Heart left ventricle (tissue), 16 donors: ENCODE measurements at regions of chr3 and their contacts with region 1.

Region 1: DNA sequence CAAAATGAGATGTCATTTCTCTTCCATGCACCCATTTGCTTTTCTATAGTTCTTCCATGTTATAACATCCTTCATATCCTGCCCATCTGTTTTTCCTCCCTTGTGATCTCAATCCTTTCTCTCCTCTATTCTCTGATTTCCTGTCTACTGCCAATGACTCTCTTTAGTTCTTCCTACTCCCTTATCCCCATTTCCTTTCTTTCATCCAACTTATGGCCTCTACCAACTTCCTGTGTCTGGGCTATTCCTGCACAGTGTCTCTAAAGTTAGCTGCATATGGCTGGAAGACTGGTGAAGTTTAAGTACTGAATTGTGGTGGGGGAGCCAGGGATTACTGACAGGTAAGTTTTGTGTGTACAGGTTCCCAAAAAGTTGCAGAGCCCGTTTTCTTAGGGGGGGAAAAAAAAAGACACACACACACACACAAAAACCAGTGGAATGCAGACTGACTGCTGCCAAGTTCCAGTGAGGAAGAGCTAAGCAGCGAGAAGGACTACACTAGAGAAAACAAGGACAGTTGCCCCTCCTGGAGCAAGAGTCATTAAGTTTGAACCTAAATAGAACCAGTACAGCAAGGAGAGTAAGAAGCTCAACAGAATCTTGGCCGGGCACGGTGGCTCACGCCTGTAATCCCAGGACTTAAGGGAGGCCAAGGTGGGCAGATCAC is 28.8 kb downstream of the XRN1 start:
- DNase-seq: no peak
- ATAC-seq: no peak
- H3K4me3 ChIP-seq: no peak overlapping the region
- H3K27ac ChIP-seq: no peak overlapping the region
- H3K4me1 ChIP-seq: no peaks in the 10 kb centered on the region
- H3K27me3 ChIP-seq: no peaks in the 10 kb centered on the region
- CTCF ChIP-seq: no peak
- POLR2A ChIP-seq: no peak

Region 2: GRCh38 chr3:142087676-142088075 is 331.4 kb before region 1 on chr3:
- intact Hi-C with region 1: no loop called
- DNase-seq: no peak
- ATAC-seq: no peak
- H3K4me3 ChIP-seq: no peak overlapping the region
- H3K27ac ChIP-seq: no peak overlapping the region
- H3K4me1 ChIP-seq: no peaks in the 10 kb centered on the region
- H3K27me3 ChIP-seq: no peaks in the 10 kb centered on the region
- CTCF ChIP-seq: no peak
- POLR2A ChIP-seq: no peak

Region 3: GRCh38 chr3:142165194-142165593 is 253.9 kb before region 1 on chr3:
- intact Hi-C with region 1: no loop called
- DNase-seq: no peak
- ATAC-seq: no peak
- H3K4me3 ChIP-seq: no peak overlapping the region
- H3K27ac ChIP-seq: no peak overlapping the region
- H3K4me1 ChIP-seq: no peaks in the 10 kb centered on the region
- H3K27me3 ChIP-seq: no peaks in the 10 kb centered on the region
- CTCF ChIP-seq: no peak
- POLR2A ChIP-seq: no peak

Region 4: GRCh38 chr3:142366436-142366835 is 52.6 kb before region 1 on chr3:
- intact Hi-C with region 1: loop called in 2 of 10 experiments (anchors 10 kb)
- DNase-seq: no peak
- ATAC-seq: no peak
- H3K4me3 ChIP-seq: no peak overlapping the region
- H3K27ac ChIP-seq: no peak overlapping the region
- H3K4me1 ChIP-seq: no peaks in the 10 kb centered on the region
- H3K27me3 ChIP-seq: no peaks in the 10 kb centered on the region
- CTCF ChIP-seq: peak in 1 of 12 donors; percentile 7
- POLR2A ChIP-seq: no peak